ENCODE measurements at regions of chr3 and their contacts with region 1.

Region 1: DNA sequence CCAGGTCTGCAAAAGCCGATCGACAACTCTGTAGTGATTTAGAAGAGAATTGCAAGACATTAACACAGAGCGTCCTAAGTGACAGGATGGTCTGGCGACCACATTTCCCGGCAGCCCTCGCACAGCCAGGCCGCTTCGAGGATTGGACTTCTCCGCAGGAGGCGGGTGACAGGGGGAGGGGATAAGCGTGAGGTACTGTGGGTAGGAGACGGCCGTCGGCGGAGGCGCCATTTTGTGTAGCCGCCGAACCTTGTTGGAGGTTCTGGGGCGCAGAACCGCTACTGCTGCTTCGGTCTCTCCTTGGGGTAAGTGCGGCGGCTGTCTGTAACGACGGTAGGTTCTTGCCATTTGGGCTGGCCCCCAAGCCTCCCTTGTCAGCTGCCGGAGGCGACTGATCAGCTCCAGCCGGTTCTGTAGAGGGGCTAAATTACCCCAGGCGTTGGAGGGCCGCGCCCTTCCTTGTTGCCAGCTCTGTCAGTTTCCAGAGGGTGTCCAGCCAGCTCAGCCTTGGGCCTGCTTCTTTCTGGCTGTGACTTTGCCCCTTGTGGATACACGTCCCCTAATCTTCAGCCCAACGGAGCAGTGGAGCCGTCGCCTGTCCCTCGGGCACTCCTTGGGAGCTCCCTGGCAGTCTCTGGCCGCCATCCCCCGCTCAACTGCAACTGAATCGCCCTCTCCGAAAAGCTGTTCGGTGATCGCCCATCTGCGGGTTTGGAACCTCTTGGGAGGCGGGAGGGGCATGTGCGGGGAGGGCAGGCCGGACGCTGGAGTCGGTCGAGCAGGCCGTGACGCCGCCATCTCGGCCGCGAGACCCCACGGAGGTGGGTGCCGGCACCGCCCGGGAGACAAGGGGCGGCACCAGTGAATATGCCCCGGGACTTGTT is at the start of gene RBM5:
- DNase-seq: peak; percentile 96
- H3K4me3 Mint-ChIP-seq: peak within 1 kb of the TSS; percentile 98
- H3K27ac Mint-ChIP-seq: peak within 1 kb of the TSS; percentile 96
- H3K4me1 Mint-ChIP-seq: peaks cover 24% of the 10 kb centered on the region
- H3K27me3 Mint-ChIP-seq: no peaks in the 10 kb centered on the region
- total RNA-seq, gene RBM5: 95.2 to 107 TPM

Region 2: DNA sequence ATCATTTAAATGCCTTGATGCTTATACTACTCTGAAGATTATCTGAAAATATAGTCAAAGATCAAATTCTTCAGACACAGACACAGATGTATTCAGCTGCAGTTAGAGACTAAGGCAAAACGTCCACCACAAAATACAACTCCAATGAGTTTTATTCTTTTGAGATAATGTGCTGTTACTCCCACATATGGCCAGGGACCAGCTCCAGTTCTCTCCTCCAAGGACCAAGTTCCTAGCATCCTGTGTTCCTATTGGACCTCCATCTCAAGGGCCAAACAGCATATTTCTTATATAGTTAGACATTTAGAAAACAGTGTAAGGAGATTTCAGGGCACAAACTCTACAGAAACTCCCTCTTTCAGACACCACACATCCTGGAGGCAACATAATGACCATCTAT is 329.7 kb before region 1 on chr3:
- CTCF ChIA-PET with region 1: no interaction called
- POLR2A ChIA-PET with region 1: no interaction called
- intact Hi-C with region 1: no loop called
- DNase-seq: no peak
- H3K4me3 Mint-ChIP-seq: no peak overlapping the region
- H3K27ac Mint-ChIP-seq: no peak overlapping the region
- H3K4me1 Mint-ChIP-seq: peaks cover 18% of the 10 kb centered on the region
- H3K27me3 Mint-ChIP-seq: no peaks in the 10 kb centered on the region

Region 3: DNA sequence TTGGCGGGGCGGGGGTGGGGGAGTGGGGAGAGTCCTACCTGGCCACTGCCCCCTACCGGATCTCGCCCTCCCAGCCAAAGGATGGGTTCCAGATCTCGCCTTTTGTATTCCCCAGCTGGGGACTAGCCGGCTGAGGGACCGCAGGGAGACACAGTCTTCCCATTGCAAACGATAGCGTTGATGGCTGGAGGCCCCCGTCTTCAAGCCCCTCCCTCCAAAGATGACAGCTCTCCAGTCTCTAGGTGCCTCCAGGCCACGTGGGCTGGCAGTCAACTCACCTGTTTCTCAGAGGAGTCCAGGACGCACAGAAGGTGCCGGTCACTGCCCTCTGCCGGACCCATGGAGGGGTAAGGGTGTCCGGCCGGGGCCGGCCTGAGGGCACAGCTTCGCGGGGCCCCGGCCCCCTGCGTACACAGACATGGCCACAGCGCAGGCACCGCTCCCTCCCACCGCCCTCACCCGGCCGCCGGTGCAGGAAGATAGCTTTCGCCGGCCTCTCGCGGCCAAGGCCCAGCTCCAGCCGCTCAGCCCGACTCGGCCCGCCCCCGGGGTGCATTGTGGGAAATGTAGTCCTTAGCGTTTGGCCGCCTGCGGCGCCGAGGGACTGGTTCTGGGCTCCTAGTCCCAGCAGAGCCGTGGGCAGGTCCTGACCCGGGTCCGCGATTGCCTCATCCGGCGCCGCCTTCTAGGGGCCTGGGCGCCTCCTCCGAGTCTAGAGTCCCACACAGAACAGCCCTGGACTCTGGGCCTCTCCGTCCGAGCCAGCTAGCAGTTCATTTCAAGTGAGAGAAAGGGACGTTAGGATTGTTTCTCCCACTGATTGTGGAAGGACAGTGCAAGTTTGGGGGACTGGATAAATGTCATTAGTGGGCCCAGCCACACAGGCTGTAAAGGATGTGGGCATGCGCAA is 159.4 kb before region 1 on chr3 and contains the start of gene MON1A:
- CTCF ChIA-PET with region 1: no interaction called
- POLR2A ChIA-PET with region 1: interaction called, 3 read pairs
- intact Hi-C with region 1: loop called (anchors 1 kb)
- DNase-seq: peak; percentile 92
- H3K4me3 Mint-ChIP-seq: peak within 1 kb of the TSS; percentile 79
- H3K27ac Mint-ChIP-seq: peak within 1 kb of the TSS; percentile 80
- H3K4me1 Mint-ChIP-seq: peaks cover 21% of the 10 kb centered on the region
- H3K27me3 Mint-ChIP-seq: no peaks in the 10 kb centered on the region
- total RNA-seq, gene MON1A: 6.3 to 7.8 TPM

Region 4: GRCh38 chr3:49939858-49940666 is 148.9 kb before region 1 on chr3 and contains the start of gene RBM6:
- CTCF ChIA-PET with region 1: interaction called, 4 read pairs
- POLR2A ChIA-PET with region 1: no interaction called
- intact Hi-C with region 1: loop called (anchors 1 kb)
- DNase-seq: peak; percentile 98
- H3K4me3 Mint-ChIP-seq: peak within 1 kb of the TSS; percentile 88
- H3K27ac Mint-ChIP-seq: peak within 1 kb of the TSS; percentile 90
- H3K4me1 Mint-ChIP-seq: peaks cover 30% of the 10 kb centered on the region
- H3K27me3 Mint-ChIP-seq: no peaks in the 10 kb centered on the region
- total RNA-seq, gene RBM6: 73.5 to 83.7 TPM

Region 5: GRCh38 chr3:50138266-50139200 is 49.6 kb after region 1 on chr3:
- CTCF ChIA-PET with region 1: no interaction called
- POLR2A ChIA-PET with region 1: no interaction called
- intact Hi-C with region 1: no loop called
- DNase-seq: no peak
- H3K4me3 Mint-ChIP-seq: no peak overlapping the region
- H3K27ac Mint-ChIP-seq: no peak overlapping the region
- H3K4me1 Mint-ChIP-seq: peaks cover 11% of the 10 kb centered on the region
- H3K27me3 Mint-ChIP-seq: no peaks in the 10 kb centered on the region

Region 6: DNA sequence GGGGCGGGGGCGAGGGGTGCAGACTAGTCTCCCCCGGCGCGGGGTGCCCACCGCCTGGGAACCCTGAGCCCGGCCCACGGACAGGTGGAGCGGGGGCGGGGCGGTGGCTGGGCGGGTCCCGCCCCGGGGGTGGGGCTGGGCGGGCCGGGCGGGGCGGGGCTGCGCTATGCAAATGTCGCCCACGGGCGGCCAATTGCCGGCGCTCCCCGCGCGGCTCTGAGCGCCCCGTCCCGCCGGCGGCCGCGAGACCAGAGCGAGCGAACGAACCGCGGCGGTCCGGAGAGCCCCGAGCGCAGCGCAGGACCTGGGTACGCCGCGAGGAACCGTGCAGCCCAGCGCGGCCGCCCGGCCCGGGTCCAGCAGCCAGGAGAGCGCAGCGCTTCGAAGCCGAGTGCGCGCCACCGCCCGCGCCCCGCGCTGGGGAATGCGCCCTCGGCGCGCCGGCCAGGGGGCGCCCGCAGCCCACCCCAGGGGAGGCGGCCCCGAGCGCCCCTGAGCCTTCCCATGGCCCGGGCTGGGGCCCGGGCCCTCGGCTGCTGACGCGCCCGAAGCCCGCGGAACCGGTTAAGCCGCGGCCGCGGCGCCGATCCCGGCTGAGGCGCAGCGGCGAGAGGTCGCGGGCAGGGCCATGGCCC is 66.0 kb after region 1 on chr3 and contains the start of gene SEMA3F:
- CTCF ChIA-PET with region 1: no interaction called
- POLR2A ChIA-PET with region 1: no interaction called
- intact Hi-C with region 1: loop called (anchors 2 kb)
- DNase-seq: peak; percentile 72
- H3K4me3 Mint-ChIP-seq: peak within 1 kb of the TSS; percentile 65
- H3K27ac Mint-ChIP-seq: no peak within 1 kb of the TSS
- H3K4me1 Mint-ChIP-seq: peaks cover 8% of the 10 kb centered on the region
- H3K27me3 Mint-ChIP-seq: peaks cover 32% of the 10 kb centered on the region
- total RNA-seq, gene SEMA3F: 0.17 to 0.19 TPM

Region 7: GRCh38 chr3:50164984-50165909 is 76.3 kb after region 1 on chr3:
- CTCF ChIA-PET with region 1: no interaction called
- POLR2A ChIA-PET with region 1: no interaction called
- intact Hi-C with region 1: no loop called
- DNase-seq: no peak
- H3K4me3 Mint-ChIP-seq: no peak overlapping the region
- H3K27ac Mint-ChIP-seq: no peak overlapping the region
- H3K4me1 Mint-ChIP-seq: no peaks in the 10 kb centered on the region
- H3K27me3 Mint-ChIP-seq: no peaks in the 10 kb centered on the region

Region 8: GRCh38 chr3:50205414-50206276 is 116.7 kb after region 1 on chr3:
- CTCF ChIA-PET with region 1: no interaction called
- POLR2A ChIA-PET with region 1: no interaction called
- intact Hi-C with region 1: no loop called
- DNase-seq: peak; percentile 41
- H3K4me3 Mint-ChIP-seq: peak overlapping the region; percentile 16
- H3K27ac Mint-ChIP-seq: no peak overlapping the region
- H3K4me1 Mint-ChIP-seq: peaks cover 2% of the 10 kb centered on the region
- H3K27me3 Mint-ChIP-seq: peaks cover 43% of the 10 kb centered on the region